CD4-positive, alpha-beta T cell (primary cell): ENCODE measurements at regions of chr7 and their contacts with region 1.

Region 1: DNA sequence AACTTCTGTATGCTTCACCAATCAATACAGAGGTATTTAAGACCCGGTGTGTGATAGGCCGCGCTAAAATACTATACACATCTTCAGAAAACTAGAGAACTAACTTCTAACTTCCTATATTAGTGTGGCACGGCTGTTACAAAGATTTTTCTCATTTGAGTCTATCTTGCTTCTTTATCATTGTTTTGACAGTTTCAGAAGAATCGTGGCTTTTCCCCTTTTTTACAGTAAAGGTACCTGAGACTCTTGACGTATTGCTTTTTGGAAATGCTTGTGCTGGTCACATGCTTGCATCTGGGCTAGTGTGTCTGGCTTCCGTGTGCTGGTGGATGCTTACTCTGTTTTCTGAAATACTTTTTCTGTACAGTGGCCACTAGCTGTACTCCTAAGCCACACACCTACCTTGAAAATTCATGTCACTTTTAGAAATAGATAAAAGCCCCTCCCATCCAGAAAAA is 12.7 kb downstream of the IKZF1 start:
- DNase-seq: peak in 7 of 14 experiments; percentile 46 to 94 (median 75)
- ATAC-seq: peak; percentile 73
- H3K4me3 ChIP-seq: peak overlapping the region; percentile 55
- H3K4me3 Mint-ChIP-seq: peak overlapping the region; percentile 100
- H3K27ac ChIP-seq: peak overlapping the region; percentile 91 to 93
- H3K27ac Mint-ChIP-seq: no peak overlapping the region
- H3K4me1 ChIP-seq: peaks cover 71% of the 10 kb centered on the region
- H3K4me1 Mint-ChIP-seq: peaks cover 98% of the 10 kb centered on the region
- H3K27me3 ChIP-seq: no peaks in the 10 kb centered on the region
- H3K27me3 Mint-ChIP-seq: no peaks in the 10 kb centered on the region
- CTCF ChIP-seq: peak; percentile 29

Region 2: DNA sequence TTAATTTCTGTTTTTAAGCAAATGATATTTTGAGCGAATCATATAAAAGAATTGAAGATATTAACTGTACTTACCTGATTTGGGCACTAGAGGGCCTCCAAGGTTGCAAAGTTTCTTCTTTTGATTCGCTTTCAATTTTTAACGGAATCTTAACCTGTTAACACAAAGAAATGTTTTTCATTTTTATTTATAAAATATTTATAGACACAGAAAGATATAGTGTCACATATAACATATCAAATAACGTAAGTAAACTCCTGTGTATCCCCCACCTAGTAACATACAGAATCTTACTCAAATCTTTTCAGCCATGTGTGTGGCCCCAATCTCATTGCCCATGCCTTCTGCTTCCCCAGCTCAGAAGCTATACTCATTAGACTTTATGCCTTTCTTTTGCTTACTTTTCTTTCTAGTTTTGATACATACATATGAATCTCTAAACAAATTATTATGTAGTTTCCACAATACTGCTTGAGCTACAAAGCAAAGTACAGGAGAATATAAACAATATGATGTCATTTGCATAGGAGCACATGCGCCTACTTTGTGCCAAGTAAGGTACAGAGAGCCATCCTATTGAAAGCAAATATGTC is 174.7 kb before region 1 on chr7:
- CTCF ChIA-PET with region 1: no interaction called
- POLR2A ChIA-PET with region 1: interaction called, 3 read pairs
- intact Hi-C with region 1: loop called in 1 of 2 experiments (anchors 2 kb)
- DNase-seq: peak in 7 of 14 experiments; percentile 24 to 83 (median 66)
- ATAC-seq: peak; percentile 75
- H3K4me3 ChIP-seq: no peak overlapping the region
- H3K4me3 Mint-ChIP-seq: peak overlapping the region; percentile 44
- H3K27ac ChIP-seq: no peak overlapping the region
- H3K27ac Mint-ChIP-seq: peak overlapping the region; percentile 35
- H3K4me1 ChIP-seq: peaks cover 15% of the 10 kb centered on the region
- H3K4me1 Mint-ChIP-seq: peaks cover 33% of the 10 kb centered on the region
- H3K27me3 ChIP-seq: no peaks in the 10 kb centered on the region
- H3K27me3 Mint-ChIP-seq: no peaks in the 10 kb centered on the region
- CTCF ChIP-seq: peak; percentile 83

Region 3: DNA sequence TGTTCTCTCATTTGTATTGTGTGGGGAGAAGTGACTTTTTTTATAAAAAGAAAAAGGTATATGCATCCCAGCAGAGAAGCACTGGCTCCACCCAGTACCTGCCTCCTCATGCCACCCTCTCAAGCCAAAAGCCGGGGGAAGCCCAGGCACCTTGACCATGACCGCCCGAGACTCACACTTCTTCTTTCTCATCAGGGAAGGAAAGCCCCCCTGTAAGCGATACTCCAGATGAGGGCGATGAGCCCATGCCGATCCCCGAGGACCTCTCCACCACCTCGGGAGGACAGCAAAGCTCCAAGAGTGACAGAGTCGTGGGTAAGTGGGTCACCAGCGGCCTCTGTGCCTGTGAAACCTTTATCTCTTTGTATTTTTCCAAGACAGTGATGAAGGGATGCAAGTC is 10.2 kb after region 1 on chr7:
- CTCF ChIA-PET with region 1: interaction called, 9 read pairs
- POLR2A ChIA-PET with region 1: interaction called, 342 read pairs
- intact Hi-C with region 1: loop called (anchors 1 to 2 kb)
- DNase-seq: no peak
- ATAC-seq: no peak
- H3K4me3 ChIP-seq: no peak overlapping the region
- H3K4me3 Mint-ChIP-seq: no peak overlapping the region
- H3K27ac ChIP-seq: peak overlapping the region; percentile 24 to 43
- H3K27ac Mint-ChIP-seq: no peak overlapping the region
- H3K4me1 ChIP-seq: peaks cover 80% of the 10 kb centered on the region
- H3K4me1 Mint-ChIP-seq: peaks cover 56% of the 10 kb centered on the region
- H3K27me3 ChIP-seq: no peaks in the 10 kb centered on the region
- H3K27me3 Mint-ChIP-seq: no peaks in the 10 kb centered on the region
- CTCF ChIP-seq: no peak

Region 4: DNA sequence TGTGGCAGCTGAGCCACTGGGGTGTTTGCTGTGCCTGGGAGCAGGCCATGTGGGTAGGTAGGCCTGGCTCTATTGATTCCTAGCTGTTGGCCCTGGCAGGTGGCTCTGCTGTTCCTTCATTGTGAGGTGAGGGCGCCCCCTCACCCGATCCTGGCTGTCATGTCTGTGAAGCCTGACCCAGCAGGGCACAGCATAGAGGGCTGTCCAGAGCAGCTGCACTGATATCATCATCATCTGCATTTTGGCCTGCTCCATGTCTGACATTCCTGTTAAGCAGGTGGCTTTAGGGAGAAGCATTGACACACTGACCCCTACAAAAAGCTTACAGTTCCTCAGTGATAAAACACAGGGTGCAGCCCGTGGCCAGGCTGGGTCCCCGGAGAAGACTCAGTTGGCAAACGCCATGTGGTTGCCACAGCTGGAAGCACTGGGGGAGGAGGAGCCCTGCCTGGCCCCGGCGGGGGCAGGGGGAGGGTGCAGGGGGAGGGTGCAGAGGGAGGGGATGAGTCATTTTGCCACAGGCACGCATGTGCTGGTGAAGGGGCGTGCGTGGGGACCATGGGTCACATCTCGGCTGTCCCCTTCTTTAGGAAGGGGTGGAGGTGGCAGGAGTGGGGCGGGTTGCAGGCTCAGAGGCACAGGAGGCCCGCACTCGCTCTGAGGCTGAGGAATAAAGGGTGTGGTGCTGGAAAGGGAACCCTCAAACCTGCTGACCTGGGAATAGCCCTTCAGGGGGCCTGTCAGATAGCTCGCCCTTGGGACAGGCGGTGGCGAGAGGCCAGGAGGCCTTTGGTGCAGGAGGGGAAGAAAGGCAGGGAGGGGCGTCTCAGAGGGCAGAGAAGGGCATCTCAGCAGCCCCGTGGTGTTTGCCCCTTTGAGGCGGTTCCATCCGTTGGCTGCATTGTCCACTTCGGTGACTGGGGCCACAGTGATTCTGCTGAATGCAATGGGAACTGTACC is 18.8 kb after region 1 on chr7:
- CTCF ChIA-PET with region 1: interaction called, 9 read pairs
- POLR2A ChIA-PET with region 1: interaction called, 2,111 read pairs
- intact Hi-C with region 1: loop called (anchors 1 to 2 kb)
- DNase-seq: peak in 13 of 14 experiments; percentile 73 to 91 (median 85)
- ATAC-seq: peak; percentile 50
- H3K4me3 ChIP-seq: peak overlapping the region; percentile 24
- H3K4me3 Mint-ChIP-seq: no peak overlapping the region
- H3K27ac ChIP-seq: peak overlapping the region; percentile 87 to 91
- H3K27ac Mint-ChIP-seq: no peak overlapping the region
- H3K4me1 ChIP-seq: peaks cover 94% of the 10 kb centered on the region
- H3K4me1 Mint-ChIP-seq: peaks cover 14% of the 10 kb centered on the region
- H3K27me3 ChIP-seq: no peaks in the 10 kb centered on the region
- H3K27me3 Mint-ChIP-seq: no peaks in the 10 kb centered on the region
- CTCF ChIP-seq: no peak

Region 5: DNA sequence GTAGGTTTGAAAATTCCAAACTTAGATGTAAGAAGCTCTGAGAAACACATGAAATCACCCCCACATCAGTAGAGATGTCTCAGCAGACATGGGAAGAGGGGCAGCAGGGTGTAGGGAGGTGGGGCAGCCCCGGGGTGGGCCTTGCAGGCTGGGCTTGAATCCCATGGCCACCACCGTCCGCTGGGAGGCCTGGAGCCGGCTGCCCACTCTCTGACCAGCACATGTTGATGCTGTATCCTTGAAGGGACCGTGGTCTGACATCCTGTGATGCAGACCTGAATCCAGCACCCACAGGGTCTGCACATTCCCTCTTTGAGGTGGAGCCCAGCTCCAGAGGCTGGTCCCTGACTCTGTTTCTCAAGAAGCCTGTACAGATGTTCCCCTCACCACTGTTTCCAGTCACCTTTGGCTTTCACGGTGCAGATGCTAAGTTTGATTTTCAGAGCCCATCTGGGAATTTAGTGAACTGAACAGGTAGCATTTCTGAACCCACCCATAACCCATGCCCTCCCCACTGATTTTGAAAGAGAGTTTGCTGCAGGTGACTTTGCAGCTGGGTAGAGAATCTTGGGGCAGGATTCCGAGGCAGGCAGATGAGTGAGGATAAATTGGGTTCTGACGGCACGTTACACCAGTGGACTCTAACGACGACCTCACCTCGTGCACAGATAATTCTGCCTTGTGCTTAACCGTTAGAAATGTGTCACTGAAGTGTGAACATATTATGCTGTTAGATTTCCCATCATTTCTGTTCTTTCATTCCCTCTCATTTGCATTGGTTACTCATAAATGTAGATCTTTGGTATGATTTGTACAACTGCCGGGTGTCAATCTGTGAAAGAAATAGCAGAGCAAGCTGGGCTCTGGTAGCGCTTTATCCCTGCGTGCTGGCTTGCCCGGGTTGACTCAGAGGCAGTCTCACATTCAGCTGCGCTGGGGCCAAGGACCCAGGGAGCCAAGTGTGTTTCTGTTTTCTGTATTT is 33.0 kb after region 1 on chr7:
- CTCF ChIA-PET with region 1: interaction called, 11 read pairs
- POLR2A ChIA-PET with region 1: interaction called, 2,111 read pairs
- intact Hi-C with region 1: no loop called
- DNase-seq: peak; percentile 47 to 84 (median 75)
- ATAC-seq: peak; percentile 63
- H3K4me3 ChIP-seq: peak overlapping the region; percentile 23
- H3K4me3 Mint-ChIP-seq: peak overlapping the region; percentile 52
- H3K27ac ChIP-seq: peak overlapping the region; percentile 86 to 95
- H3K27ac Mint-ChIP-seq: no peak overlapping the region
- H3K4me1 ChIP-seq: peaks cover 92% of the 10 kb centered on the region
- H3K4me1 Mint-ChIP-seq: peaks cover 98% of the 10 kb centered on the region
- H3K27me3 ChIP-seq: no peaks in the 10 kb centered on the region
- H3K27me3 Mint-ChIP-seq: no peaks in the 10 kb centered on the region
- CTCF ChIP-seq: no peak

Region 6: DNA sequence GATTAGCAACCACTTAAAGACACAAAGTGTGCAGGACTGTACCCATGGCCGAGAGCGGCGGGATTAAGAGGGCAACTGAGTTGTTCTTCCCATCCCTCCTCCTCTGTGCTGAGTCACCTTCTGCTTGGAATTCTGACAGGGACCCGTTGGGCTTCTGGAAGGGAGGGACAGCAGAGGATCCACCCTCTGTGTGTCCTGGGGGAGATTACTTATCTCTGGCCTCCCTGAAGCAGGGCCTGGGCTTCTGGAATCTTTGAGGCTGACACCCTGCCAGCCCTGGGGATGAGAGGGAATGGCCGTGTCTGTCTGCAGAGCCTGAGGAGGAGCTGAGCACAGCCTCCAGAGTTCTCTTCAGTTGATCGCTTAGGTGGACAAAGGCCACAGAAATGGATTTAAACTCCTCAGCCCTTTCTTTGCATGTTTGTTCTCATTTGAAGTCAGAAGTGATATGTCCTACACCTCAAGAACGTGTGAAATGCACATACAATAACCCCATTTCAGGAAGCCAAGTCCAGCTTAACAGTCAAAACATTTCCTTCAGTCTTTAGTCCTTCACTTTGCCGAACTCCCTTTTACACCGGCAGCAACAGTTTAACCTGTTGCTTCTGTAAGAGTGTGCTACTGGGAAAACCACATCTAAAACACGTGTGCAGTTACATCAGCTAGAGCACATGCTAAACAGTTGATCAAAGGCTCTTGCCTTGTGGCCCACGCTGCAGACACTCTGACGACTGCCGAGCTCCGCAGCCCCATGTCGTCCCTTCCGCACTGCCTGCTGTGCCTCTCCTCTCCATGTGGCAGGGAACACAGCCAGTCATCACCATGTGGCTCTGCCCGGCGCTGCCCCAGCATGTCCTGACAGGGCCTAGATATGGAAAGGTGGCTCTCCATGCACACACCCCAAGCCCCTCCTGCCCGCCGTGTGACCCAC is 43.0 kb after region 1 on chr7:
- CTCF ChIA-PET with region 1: interaction called, 5 read pairs
- POLR2A ChIA-PET with region 1: interaction called, 2,111 read pairs
- intact Hi-C with region 1: loop called in 1 of 2 experiments (anchors 2 kb)
- DNase-seq: peak; percentile 71 to 96 (median 79)
- ATAC-seq: peak; percentile 86
- H3K4me3 ChIP-seq: peak overlapping the region; percentile 17
- H3K4me3 Mint-ChIP-seq: peak overlapping the region; percentile 76
- H3K27ac ChIP-seq: peak overlapping the region; percentile 86 to 96
- H3K27ac Mint-ChIP-seq: no peak overlapping the region
- H3K4me1 ChIP-seq: peaks cover 96% of the 10 kb centered on the region
- H3K4me1 Mint-ChIP-seq: peaks cover 96% of the 10 kb centered on the region
- H3K27me3 ChIP-seq: no peaks in the 10 kb centered on the region
- H3K27me3 Mint-ChIP-seq: no peaks in the 10 kb centered on the region
- CTCF ChIP-seq: no peak